Esophagus squamous epithelium (tissue), 5 donors: ENCODE measurements at regions of chr17 and their contacts with region 1.

Region 1: GRCh38 chr17:19648475-19649406 is at the start of gene ALDH3A2:
- DNase-seq: peak; percentile 78
- H3K4me3 ChIP-seq: peak within 1 kb of the TSS; percentile 67 to 95 (median 86)
- H3K27ac ChIP-seq: peak within 1 kb of the TSS; percentile 93 to 99 (median 97)
- H3K4me1 ChIP-seq: peaks cover 22 to 87% (median 37%) of the 10 kb centered on the region in 3 donors
- H3K27me3 ChIP-seq: no peaks in the 10 kb centered on the region
- CTCF ChIP-seq: peak in 5 of 6 experiments; percentile 11 to 23 (median 12)
- POLR2A ChIP-seq: peak in 3 of 4 donors; percentile 85 to 96 (median 95)
- total RNA-seq, gene ALDH3A2: 169 to 351 (median 305) TPM

Region 2: GRCh38 chr17:19513897-19514488 is 134.7 kb before region 1 on chr17:
- intact Hi-C with region 1: loop called (anchors 10 kb)
- DNase-seq: no peak
- H3K4me3 ChIP-seq: no peak overlapping the region
- H3K27ac ChIP-seq: peak overlapping the region in 2 of 4 donors; percentile 5 to 23
- H3K4me1 ChIP-seq: peaks cover 0 to 6% (median 0%) of the 10 kb centered on the region in 3 donors
- H3K27me3 ChIP-seq: no peaks in the 10 kb centered on the region
- CTCF ChIP-seq: peak; percentile 72 to 92 (median 89)
- POLR2A ChIP-seq: no peak

Region 3: DNA sequence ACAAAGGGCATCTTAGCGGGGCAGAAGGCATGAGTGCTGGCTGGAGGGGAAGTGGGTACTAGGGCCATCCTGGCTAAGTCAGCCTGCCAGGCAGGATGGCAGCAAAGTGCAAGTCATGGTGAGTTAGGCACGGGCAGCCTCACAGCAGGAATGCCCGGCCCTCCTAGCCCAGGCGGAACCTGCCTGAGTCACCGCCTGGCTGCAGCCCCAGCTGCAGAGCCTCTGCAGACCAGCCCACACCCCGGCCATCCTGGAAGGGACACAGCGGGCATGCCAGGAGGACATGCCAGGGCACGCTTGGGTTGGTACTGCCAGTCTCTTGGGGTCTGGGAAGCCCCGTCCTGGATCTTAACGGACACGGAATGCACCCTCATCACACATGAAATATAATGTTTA is 104.3 kb after region 1 on chr17:
- intact Hi-C with region 1: loop called (anchors 5 kb)
- DNase-seq: no peak
- H3K4me3 ChIP-seq: no peak overlapping the region
- H3K27ac ChIP-seq: peak overlapping the region; percentile 87 to 95 (median 88)
- H3K4me1 ChIP-seq: peaks cover 31 to 71% (median 53%) of the 10 kb centered on the region in 3 donors
- H3K27me3 ChIP-seq: no peaks in the 10 kb centered on the region
- CTCF ChIP-seq: peak in 1 of 6 experiments; percentile 32
- POLR2A ChIP-seq: no peak